ENCODE measurements at regions of chr17 and their contacts with region 1.

Region 1: GRCh38 chr17:49715717-49716279 is 8.0 kb upstream of the SLC35B1 start:
- DNase-seq: peak; percentile 61
- ATAC-seq: peak; percentile 54
- H3K4me3 Mint-ChIP-seq: peak overlapping the region; percentile 18
- H3K27ac Mint-ChIP-seq: peak overlapping the region; percentile 84
- H3K4me1 Mint-ChIP-seq: peaks cover 48% of the 10 kb centered on the region
- H3K27me3 Mint-ChIP-seq: no peaks in the 10 kb centered on the region

Region 2: GRCh38 chr17:49585422-49586027 is 130.3 kb before region 1 on chr17:
- CTCF ChIA-PET with region 1: no interaction called
- DNase-seq: no peak
- ATAC-seq: no peak
- H3K4me3 Mint-ChIP-seq: no peak overlapping the region
- H3K27ac Mint-ChIP-seq: no peak overlapping the region
- H3K4me1 Mint-ChIP-seq: peaks cover 3% of the 10 kb centered on the region
- H3K27me3 Mint-ChIP-seq: no peaks in the 10 kb centered on the region

Region 3: DNA sequence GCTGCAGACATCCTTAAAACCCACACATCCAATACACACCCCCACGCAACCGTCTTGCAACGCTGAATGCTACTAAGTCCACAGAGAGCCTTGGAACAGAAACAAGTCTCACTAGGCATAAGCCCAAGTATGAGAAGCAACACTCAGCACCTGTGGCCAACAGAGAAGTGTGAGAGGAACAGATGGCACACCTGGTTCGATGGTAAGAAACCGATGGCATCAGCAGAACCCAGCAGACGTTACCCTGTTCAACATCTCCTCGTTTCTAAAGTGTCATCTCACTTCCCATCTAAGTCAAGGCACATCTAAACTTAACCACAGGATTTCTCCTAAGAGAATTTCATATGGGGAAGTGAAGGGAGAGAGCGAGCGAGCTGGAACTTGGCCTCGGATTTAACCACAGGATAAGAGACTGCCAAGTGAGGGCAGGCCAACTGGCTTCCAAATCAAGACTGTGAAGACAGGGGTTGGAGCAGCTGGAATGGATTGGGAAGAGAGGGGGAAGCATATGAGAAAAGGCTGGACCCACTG is 99.1 kb before region 1 on chr17:
- CTCF ChIA-PET with region 1: no interaction called
- DNase-seq: no peak
- ATAC-seq: no peak
- H3K4me3 Mint-ChIP-seq: no peak overlapping the region
- H3K27ac Mint-ChIP-seq: no peak overlapping the region
- H3K4me1 Mint-ChIP-seq: peaks cover 16% of the 10 kb centered on the region
- H3K27me3 Mint-ChIP-seq: no peaks in the 10 kb centered on the region

Region 4: GRCh38 chr17:49694847-49695683 is 20.7 kb before region 1 on chr17:
- CTCF ChIA-PET with region 1: interaction called, 13 read pairs
- DNase-seq: peak; percentile 83
- ATAC-seq: peak; percentile 38
- H3K4me3 Mint-ChIP-seq: no peak overlapping the region
- H3K27ac Mint-ChIP-seq: peak overlapping the region; percentile 83
- H3K4me1 Mint-ChIP-seq: peaks cover 33% of the 10 kb centered on the region
- H3K27me3 Mint-ChIP-seq: no peaks in the 10 kb centered on the region

Region 5: DNA sequence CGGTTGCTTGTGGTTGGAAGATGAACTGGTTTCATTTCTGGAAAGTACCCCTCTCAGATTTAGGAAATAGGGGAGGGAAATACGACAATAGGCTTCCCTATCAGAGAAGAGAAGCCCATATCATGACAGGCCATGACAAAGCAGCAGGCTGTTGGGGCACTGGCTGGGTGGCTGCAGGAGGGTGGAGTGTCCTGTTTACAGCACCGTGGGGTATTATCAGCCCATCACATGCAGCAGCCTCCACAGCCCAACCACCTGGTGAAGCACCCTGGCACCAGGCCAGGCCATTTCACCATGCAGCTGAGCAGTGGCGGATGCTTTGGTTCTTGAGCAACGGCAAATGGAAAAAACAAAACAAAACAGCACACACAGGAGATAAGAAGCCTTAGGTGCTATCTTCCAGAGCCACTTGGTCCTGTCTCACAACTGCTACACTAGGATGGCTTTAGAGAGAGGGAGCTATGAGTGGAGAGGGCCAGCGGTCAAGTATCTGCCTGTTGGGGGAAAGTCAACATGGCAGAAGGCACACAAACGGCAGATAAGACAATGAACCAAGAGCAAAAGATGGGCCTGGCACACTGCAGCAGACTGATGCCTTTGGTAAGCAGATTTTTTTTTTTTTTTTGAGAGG is 24.0 kb after region 1 on chr17:
- CTCF ChIA-PET with region 1: interaction called, 10 read pairs
- DNase-seq: peak; percentile 95
- ATAC-seq: peak; percentile 93
- H3K4me3 Mint-ChIP-seq: peak overlapping the region; percentile 86
- H3K27ac Mint-ChIP-seq: peak overlapping the region; percentile 100
- H3K4me1 Mint-ChIP-seq: peaks cover 75% of the 10 kb centered on the region
- H3K27me3 Mint-ChIP-seq: no peaks in the 10 kb centered on the region

Region 6: DNA sequence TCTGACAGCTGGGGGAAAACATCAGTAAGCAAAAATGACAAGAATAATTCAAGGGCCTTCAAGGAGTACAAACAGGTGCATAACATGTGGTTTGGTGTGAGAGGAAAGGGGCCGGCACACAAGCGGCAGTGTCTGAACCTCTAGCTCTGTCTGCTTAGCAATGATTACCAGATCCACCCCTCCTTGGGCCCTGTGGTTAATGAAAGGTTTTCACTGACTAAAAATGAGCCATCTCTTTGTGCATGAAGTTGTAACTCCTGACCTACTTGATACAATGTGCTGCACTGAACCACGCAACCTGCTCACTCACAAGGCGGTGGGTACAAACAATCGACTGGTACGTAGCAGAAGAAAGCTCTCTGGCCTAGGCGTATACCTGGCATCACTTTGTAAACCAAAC is 33.0 kb after region 1 on chr17:
- CTCF ChIA-PET with region 1: interaction called, 27 read pairs
- DNase-seq: peak; percentile 85
- ATAC-seq: peak; percentile 76
- H3K4me3 Mint-ChIP-seq: peak overlapping the region; percentile 69
- H3K27ac Mint-ChIP-seq: peak overlapping the region; percentile 94
- H3K4me1 Mint-ChIP-seq: peaks cover 74% of the 10 kb centered on the region
- H3K27me3 Mint-ChIP-seq: no peaks in the 10 kb centered on the region

Region 7: DNA sequence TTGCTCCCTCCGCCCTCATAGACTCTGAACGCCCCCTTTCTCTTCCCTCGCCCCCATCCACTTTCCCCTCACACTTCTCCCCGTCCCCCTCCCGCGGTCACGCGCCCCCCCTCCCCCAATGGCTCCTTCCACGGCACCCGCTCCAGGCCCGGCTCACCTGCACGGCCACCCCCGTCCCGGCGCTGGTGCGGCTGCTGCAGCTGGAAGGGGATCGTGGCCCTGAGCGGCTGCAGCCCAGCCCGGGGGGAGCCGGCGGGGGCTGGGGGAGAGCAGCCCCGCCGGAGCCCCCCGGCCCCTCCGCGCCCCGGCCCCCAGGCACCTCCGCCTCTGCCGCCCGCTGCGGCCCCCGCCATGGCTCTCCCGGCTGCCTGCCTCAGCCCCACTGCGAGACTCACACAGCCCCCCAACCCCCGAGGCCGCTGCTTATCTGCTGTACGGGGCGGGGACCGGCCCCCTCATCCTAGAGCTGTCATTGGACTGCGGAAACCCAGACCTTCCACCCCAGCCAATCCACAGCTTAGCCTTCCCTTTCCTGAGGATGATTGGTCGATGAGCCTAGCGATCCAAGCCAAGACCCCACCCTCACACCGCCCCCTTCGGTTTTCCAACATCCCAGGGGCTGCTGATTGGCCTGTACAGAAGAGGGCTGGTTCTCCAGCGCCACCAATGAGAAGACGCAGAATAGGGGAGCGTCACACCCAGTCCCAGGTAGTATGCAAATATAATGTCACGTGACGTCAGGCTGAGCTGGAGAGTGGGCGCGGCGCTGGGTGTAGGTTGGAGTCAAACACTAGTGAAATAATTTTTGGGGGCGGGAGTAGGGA is 48.1 kb after region 1 on chr17 and contains the start of gene FAM117A:
- CTCF ChIA-PET with region 1: interaction called, 15 read pairs
- DNase-seq: peak; percentile 100
- ATAC-seq: peak; percentile 95
- H3K4me3 Mint-ChIP-seq: peak within 1 kb of the TSS; percentile 94
- H3K27ac Mint-ChIP-seq: peak within 1 kb of the TSS; percentile 90
- H3K4me1 Mint-ChIP-seq: peaks cover 48% of the 10 kb centered on the region
- H3K27me3 Mint-ChIP-seq: peaks cover 26% of the 10 kb centered on the region
- total RNA-seq, gene FAM117A: 31.6 to 44.9 TPM

Region 8: GRCh38 chr17:49779739-49780231 is 64.0 kb after region 1 on chr17:
- CTCF ChIA-PET with region 1: interaction called, 11 read pairs
- DNase-seq: peak; percentile 55
- ATAC-seq: peak; percentile 63
- H3K4me3 Mint-ChIP-seq: no peak overlapping the region
- H3K27ac Mint-ChIP-seq: no peak overlapping the region
- H3K4me1 Mint-ChIP-seq: peaks cover 23% of the 10 kb centered on the region
- H3K27me3 Mint-ChIP-seq: no peaks in the 10 kb centered on the region

Region 9: DNA sequence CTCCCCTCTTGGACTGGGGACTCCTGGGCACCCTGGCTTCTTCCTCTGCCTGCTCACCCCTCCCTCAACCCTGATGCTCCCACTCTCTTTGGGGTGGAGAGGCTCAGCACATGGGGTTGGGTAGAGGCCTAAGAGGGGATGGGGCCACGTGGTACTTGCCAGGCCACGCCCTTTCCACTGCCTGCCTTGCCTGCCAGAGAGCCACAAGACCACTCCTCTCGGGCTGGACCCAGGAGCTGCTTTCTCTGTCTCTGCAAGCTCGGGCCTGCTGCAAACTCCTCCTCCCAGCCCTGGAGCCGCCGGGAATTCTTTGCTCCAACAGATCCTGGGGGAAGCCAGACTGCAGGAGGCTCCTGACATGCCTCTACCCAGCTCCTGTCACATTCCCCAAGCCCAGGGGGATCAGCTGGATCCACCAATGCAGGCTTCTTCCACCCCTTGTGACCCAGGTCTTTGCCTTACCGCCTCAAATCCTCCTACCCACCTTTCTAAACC is 265.0 kb after region 1 on chr17:
- CTCF ChIA-PET with region 1: no interaction called
- DNase-seq: no peak
- ATAC-seq: no peak
- H3K4me3 Mint-ChIP-seq: no peak overlapping the region
- H3K27ac Mint-ChIP-seq: no peak overlapping the region
- H3K4me1 Mint-ChIP-seq: no peaks in the 10 kb centered on the region
- H3K27me3 Mint-ChIP-seq: peaks cover 53% of the 10 kb centered on the region